HEK293T (cell line): ENCODE measurements at regions of chr6 and their contacts with region 1.

Region 1: GRCh38 chr6:99349171-99350141 is at the start of gene FAXC:
- DNase-seq: peak; percentile 66

Region 2: GRCh38 chr6:99330159-99330558 is 19.3 kb before region 1 on chr6:
- CTCF ChIA-PET with region 1: interaction called, 12 read pairs
- POLR2A ChIA-PET with region 1: interaction called, 4 read pairs
- DNase-seq: peak; percentile 67